Mammary epithelial cell (primary cell): ENCODE measurements at regions of chr5 and their contacts with region 1.

Region 1: DNA sequence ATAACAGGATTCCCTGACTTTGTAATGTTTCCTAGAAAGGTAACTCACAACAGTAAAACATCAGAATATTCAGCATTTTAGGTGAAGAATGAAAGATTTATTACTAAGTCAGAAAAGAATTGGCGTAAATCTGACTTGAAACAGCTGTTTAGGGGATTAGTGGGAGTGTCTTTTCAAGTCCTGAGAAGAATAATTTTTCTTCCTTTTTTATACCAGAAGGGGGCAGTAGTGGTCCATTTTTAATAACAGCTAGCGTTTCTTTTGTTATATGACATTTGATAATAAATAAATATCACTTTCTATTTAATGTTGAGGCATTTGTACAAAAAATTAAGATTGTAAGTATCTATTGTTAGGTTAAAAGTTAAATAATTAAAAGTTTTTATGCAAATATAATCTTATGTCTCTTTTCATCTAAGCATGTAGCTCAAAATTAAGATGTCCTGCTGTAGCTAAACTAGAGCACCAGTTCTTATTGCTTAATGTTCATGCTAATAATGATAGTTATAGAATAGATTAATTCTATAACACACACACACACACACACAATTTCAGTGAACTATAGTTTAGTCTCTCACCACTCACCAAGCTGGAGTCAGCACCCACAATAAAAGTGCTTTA is 258.7 kb upstream of the ARRDC3 start:
- DNase-seq: peak; percentile 8
- H3K4me3 ChIP-seq: no peak overlapping the region
- H3K27ac ChIP-seq: no peak overlapping the region
- H3K4me1 ChIP-seq: no peaks in the 10 kb centered on the region
- H3K27me3 ChIP-seq: no peaks in the 10 kb centered on the region
- CTCF ChIP-seq: peak; percentile 40 to 48

Region 2: GRCh38 chr5:91499943-91500531 is 141.8 kb before region 1 on chr5:
- CTCF ChIA-PET with region 1: no interaction called
- dilution Hi-C with region 1: no loop called
- in situ Hi-C with region 1: no loop called
- intact Hi-C with region 1: loop called (anchors 1 kb)
- DNase-seq: peak; percentile 29
- H3K4me3 ChIP-seq: no peak overlapping the region
- H3K27ac ChIP-seq: no peak overlapping the region
- H3K4me1 ChIP-seq: no peaks in the 10 kb centered on the region
- H3K27me3 ChIP-seq: no peaks in the 10 kb centered on the region
- CTCF ChIP-seq: peak; percentile 57 to 59

Region 3: DNA sequence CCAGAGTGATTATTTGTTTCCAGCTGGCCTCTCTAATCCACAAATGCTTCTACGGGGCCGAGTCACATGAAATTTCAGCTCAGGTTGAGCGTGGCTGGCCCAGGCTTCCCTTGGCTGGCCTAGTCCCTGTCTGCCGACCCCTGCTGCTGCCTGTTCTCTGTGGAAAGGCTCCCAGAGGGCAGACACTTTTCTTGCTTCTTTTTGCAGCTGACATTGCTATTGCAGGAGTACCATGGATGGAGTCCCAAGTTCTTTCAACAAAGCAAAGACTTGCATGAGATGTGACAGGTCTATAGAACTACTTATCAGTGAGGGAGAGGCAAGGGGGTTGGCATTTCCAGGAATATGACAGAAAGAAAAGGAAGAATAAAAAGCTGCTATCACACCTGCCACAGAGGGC is 28.7 kb after region 1 on chr5:
- CTCF ChIA-PET with region 1: no interaction called
- dilution Hi-C with region 1: no loop called
- in situ Hi-C with region 1: no loop called
- intact Hi-C with region 1: no loop called
- DNase-seq: no peak
- H3K4me3 ChIP-seq: no peak overlapping the region
- H3K27ac ChIP-seq: no peak overlapping the region
- H3K4me1 ChIP-seq: no peaks in the 10 kb centered on the region
- H3K27me3 ChIP-seq: peaks cover 7% of the 10 kb centered on the region
- CTCF ChIP-seq: no peak

Region 4: GRCh38 chr5:91684625-91685024 is 42.8 kb after region 1 on chr5:
- CTCF ChIA-PET with region 1: no interaction called
- dilution Hi-C with region 1: no loop called
- in situ Hi-C with region 1: no loop called
- intact Hi-C with region 1: no loop called
- DNase-seq: no peak
- H3K4me3 ChIP-seq: no peak overlapping the region
- H3K27ac ChIP-seq: no peak overlapping the region
- H3K4me1 ChIP-seq: no peaks in the 10 kb centered on the region
- H3K27me3 ChIP-seq: no peaks in the 10 kb centered on the region
- CTCF ChIP-seq: no peak